ENCODE measurements at regions of chr3 and their contacts with region 1.

Region 1: DNA sequence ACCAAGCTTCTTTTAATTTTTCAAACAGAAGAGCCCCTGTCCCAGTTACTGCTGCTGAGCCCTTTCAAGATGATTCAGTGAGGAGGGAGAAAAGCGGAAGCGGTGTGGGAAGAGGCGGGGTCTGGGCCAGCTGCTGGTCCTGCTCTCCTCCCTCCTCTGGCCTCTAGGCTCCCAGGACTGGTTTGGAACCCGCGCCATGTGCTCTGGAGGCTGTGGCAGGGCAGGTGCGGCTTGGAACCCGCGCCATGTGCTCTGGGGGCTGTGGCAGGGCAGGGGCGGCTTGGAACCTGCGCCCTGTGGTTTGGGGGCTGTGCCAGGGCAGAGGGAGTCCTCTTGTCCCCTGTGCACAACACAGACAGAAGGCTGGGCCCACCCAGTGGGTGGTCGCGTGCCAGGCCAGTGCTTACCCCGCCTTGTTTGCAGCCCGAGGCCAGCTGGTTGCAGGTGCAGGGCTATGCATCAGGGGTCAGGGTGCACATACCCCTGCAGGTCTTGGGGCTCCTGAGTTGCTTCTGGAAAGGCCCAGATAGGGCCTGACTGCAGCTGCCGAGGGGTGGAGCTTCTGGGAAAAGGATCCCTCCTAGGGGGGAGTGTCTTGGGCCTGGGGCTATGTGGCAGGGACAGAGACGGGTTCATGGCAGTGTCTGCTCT is 12.2 kb downstream of the ALG1L2 start:
- DNase-seq: no peak
- ATAC-seq: no peak
- H3K4me3 ChIP-seq: no peak overlapping the region
- H3K27ac ChIP-seq: no peak overlapping the region
- H3K4me1 ChIP-seq: no peaks in the 10 kb centered on the region
- H3K27me3 ChIP-seq: no peaks in the 10 kb centered on the region
- CTCF ChIP-seq: no peak
- POLR2A ChIP-seq: no peak
- RAD21 ChIP-seq: no peak

Region 2: DNA sequence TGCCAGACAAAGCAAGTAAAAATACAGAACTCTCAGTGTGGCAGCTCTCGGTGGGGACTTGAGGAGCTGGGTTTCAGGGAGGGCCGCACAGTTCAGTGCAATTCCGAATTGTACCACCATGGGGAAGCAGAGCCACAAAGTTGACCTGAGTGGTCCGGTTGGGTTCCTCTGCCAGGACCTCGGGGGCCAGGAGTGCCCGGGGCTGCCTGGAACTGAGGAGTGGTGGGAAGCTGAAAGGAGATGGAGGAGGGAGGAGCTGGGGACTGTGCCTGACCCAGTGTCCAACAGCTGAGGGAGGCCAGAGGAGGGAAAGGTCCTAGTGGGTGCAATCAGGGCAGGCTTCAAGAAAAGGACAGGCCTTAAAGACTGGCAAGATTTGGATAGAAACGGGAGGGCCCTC is 151.6 kb before region 1 on chr3:
- CTCF ChIA-PET with region 1: interaction called, 3 read pairs
- POLR2A ChIA-PET with region 1: no interaction called
- dilution Hi-C with region 1: no loop called
- in situ Hi-C with region 1: loop called (anchors 5 kb)
- intact Hi-C with region 1: loop called (anchors 2 kb)
- DNase-seq: peak; percentile 49
- ATAC-seq: peak; percentile 98
- H3K4me3 ChIP-seq: no peak overlapping the region
- H3K27ac ChIP-seq: no peak overlapping the region
- H3K4me1 ChIP-seq: no peaks in the 10 kb centered on the region
- H3K27me3 ChIP-seq: peaks cover 41% of the 10 kb centered on the region
- CTCF ChIP-seq: peak; percentile 72
- POLR2A ChIP-seq: no peak
- RAD21 ChIP-seq: peak; percentile 88